IMR-90 (cell line): ENCODE measurements at regions of chrX and their contacts with region 1.

Region 1: DNA sequence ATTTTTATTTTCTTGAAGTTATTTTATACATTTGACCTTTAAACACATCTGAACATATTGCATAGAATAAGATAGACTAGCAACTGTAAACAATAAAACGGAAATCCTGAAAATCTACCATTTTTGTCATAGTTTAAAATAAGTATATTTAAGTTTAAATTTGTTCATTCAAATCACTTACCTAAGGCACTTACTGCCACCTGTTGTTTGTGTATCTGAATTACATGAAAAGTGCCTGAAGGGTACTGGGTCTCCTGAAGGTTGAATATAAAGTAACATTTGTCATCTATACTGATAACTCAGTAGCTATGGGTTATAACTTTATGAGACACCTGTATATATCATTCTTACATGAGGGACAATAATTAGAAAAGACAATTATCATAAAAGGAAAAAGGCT is 38.6 kb downstream of the TRPC5 start:
- DNase-seq: peak; percentile 15
- ATAC-seq: no peak
- H3K4me3 ChIP-seq: no peak overlapping the region
- H3K27ac ChIP-seq: no peak overlapping the region
- H3K4me1 ChIP-seq: no peaks in the 10 kb centered on the region
- H3K27me3 ChIP-seq: peaks cover 5% of the 10 kb centered on the region
- CTCF ChIP-seq: peak; percentile 39; the same call in 1 of the 2 replicates
- POLR2A ChIP-seq: no peak
- RAD21 ChIP-seq: no peak

Region 2: GRCh38 chrX:111695297-111695880 is 348.6 kb before region 1 on chrX:
- CTCF ChIA-PET with region 1: no interaction called
- POLR2A ChIA-PET with region 1: no interaction called
- dilution Hi-C with region 1: no loop called
- in situ Hi-C with region 1: no loop called
- intact Hi-C with region 1: no loop called
- DNase-seq: no peak
- ATAC-seq: no peak
- H3K4me3 ChIP-seq: no peak overlapping the region
- H3K27ac ChIP-seq: no peak overlapping the region
- H3K4me1 ChIP-seq: no peaks in the 10 kb centered on the region
- H3K27me3 ChIP-seq: no peaks in the 10 kb centered on the region; the same call in 1 of the 2 replicates
- CTCF ChIP-seq: no peak
- POLR2A ChIP-seq: no peak
- RAD21 ChIP-seq: no peak

Region 3: GRCh38 chrX:111719426-111720210 is 324.4 kb before region 1 on chrX:
- CTCF ChIA-PET with region 1: interaction called, 3 read pairs
- POLR2A ChIA-PET with region 1: no interaction called
- dilution Hi-C with region 1: no loop called
- in situ Hi-C with region 1: no loop called
- intact Hi-C with region 1: loop called (anchors 1 kb)
- DNase-seq: peak; percentile 16
- ATAC-seq: peak; percentile 35
- H3K4me3 ChIP-seq: no peak overlapping the region
- H3K27ac ChIP-seq: no peak overlapping the region
- H3K4me1 ChIP-seq: 0 out of 2 replicates have a peak, but pooled peaks cover 2% of the 10 kb centered on the region
- H3K27me3 ChIP-seq: no peaks in the 10 kb centered on the region
- CTCF ChIP-seq: peak; percentile 32
- POLR2A ChIP-seq: no peak
- RAD21 ChIP-seq: peak; percentile 34; the same call in 1 of the 2 replicates

Region 4: GRCh38 chrX:112113460-112113859 is 69.5 kb after region 1 on chrX:
- CTCF ChIA-PET with region 1: no interaction called
- POLR2A ChIA-PET with region 1: no interaction called
- dilution Hi-C with region 1: no loop called
- in situ Hi-C with region 1: no loop called
- intact Hi-C with region 1: no loop called
- DNase-seq: no peak
- ATAC-seq: no peak
- H3K4me3 ChIP-seq: no peak overlapping the region
- H3K27ac ChIP-seq: no peak overlapping the region
- H3K4me1 ChIP-seq: no peaks in the 10 kb centered on the region
- H3K27me3 ChIP-seq: peaks cover 1% of the 10 kb centered on the region
- CTCF ChIP-seq: no peak
- POLR2A ChIP-seq: no peak
- RAD21 ChIP-seq: no peak